ENCODE measurements at regions of chr14 and their contacts with region 1.

Region 1: GRCh38 chr14:50619556-50620141 is 48.5 kb downstream of the SAV1 start:
- DNase-seq: no peak

Region 2: GRCh38 chr14:50714450-50715073 is 94.9 kb after region 1 on chr14:
- intact Hi-C with region 1: loop called (anchors 10 kb)
- DNase-seq: no peak

Measured in cardiac septum (tissue), 1 donor.